Gastrocnemius medialis (tissue), 4 donors: ENCODE measurements at regions of chr12 and their contacts with region 1.

Region 1: DNA sequence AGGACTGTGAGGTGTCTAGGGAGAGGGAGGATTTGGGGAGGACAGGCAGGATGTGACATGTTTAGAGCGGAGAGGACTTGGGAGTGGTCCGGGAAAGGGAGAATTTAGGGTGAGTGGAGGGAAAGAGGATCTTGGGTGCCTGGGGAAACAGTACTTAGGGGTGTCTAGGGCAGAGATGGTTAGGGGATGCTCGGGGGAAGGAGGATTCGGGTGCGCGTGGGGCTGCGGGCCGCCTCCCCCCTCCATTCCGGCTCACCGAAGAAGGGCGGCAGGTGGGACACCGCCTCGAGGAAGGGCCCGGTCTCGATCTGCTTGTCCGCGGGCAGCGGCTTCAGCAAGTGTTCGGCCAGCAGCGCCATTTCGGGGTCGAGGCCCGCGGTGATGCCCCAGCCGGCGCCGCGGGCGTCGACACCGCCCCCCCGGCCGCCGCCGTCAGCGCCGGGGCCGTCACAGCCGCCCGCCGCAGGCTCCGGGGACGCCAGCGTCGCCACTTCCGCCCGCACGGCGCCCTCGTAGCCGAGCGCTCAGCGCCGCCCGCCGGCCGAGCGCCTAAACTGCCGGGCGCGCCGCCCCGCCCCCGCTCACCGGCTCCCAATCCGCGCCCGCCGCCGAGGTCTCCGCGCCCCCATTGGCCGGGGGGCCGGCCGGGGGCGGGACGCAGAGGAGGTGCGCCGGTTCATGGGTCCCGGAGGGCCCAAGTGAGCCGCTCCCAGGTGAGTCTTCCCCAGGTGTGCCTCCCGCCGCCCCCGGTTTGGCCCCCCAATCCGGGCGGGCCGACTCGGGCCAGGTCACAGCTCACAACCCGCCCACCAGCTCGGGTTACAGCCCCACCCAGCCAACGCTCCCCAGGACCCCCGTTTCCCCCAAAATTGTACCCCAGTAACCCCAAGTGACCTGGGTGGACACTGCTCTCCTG is at the start of gene GLTP:
- DNase-seq: peak; percentile 61 to 76
- ATAC-seq: peak; percentile 91 to 96
- H3K4me3 ChIP-seq: peak within 1 kb of the TSS; percentile 66 to 94 (median 83)
- H3K27ac ChIP-seq: peak within 1 kb of the TSS; percentile 60 to 81 (median 78)
- H3K4me1 ChIP-seq: peaks cover 17 to 20% of the 10 kb centered on the region in 2 donors
- H3K27me3 ChIP-seq: no peaks in the 10 kb centered on the region
- CTCF ChIP-seq: peak in 4 of 5 experiments; percentile 85 to 98 (median 88)
- POLR2A ChIP-seq: peak; percentile 63 to 67
- total RNA-seq, gene GLTP: 18.3 to 34.0 (median 22.4) TPM

Region 2: DNA sequence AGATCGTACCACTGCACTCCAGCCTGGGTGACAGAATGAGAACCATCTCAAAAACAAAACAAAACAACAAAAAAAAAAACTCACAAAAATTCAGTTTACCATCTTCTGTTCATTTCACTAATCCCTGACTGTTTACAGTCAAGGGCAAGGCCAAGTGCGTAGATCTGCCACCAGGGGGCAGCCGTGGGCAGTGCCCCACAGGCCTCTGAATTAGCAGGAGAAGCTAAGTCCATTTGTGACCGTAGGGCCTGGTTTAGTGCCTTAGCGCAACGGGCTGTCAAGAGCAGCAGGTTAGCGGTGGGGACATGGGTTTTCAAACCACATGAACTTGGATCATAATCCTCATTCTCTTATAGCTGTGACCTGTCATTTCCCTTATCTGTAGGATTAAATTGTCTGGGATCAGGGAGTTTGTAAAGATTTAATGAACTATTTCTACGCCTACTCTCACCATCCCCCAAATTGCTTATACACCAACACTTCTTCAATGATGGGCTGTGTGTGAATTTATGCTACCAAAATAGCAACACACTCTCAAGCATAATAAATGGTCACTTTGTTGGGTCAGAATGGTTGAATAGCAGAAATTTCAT is 452.1 kb before region 1 on chr12:
- in situ Hi-C with region 1: no loop called
- intact Hi-C with region 1: loop called (anchors 5 kb)
- DNase-seq: peak; percentile 33 to 66
- ATAC-seq: peak; percentile 87 to 93
- H3K4me3 ChIP-seq: no peak overlapping the region
- H3K27ac ChIP-seq: no peak overlapping the region
- H3K4me1 ChIP-seq: peaks cover 0 to 8% of the 10 kb centered on the region in 2 donors
- H3K27me3 ChIP-seq: no peaks in the 10 kb centered on the region
- CTCF ChIP-seq: peak; percentile 70 to 97 (median 80)
- POLR2A ChIP-seq: no peak

Region 3: DNA sequence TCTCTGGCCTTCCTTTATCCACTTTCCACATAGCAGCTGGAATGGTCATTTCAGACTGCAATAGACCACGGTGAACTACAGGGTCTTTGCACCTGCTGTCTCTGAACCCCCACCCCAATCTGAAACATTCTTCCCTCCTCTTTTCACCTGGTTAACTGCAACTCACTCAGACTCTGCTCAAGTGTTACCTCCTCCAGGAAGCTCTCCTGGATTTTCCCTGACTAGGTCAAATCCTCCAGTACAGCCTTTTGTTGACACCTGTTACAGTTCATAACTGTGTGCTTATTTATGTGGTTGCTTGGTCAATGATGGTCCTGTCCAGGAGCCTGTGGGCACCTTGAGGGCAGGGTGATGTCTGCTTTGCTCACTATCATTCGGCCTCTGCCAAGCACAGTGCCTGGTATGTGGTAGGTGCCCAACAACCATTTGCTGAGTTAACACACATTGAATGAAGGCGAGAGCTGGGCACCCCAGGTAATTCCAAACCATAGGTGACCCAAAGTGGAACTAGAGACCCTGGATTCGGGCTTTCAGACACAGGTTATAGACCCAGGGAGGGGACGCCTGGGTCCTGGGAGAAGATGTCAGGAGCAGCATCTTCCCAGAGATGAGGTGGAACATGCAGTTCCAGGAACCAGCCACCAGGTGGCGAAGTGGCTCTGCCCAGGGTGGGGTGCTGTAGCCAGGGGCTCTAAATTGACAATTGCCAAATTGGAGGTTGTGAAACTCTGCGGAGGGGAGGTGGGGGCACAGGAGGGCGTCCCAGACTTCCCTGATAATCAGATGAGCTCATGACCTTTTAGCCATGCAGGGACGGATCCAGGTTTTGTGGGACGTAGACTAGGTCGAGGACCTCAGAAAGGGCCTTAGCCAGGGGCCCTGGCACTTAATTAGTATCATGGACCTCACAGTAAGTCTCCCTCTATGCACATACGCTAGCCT is 75.2 kb before region 1 on chr12:
- in situ Hi-C with region 1: loop called (anchors 5 to 10 kb)
- intact Hi-C with region 1: loop called (anchors 1 kb)
- DNase-seq: peak; percentile 25 to 43
- ATAC-seq: peak; percentile 72 to 78
- H3K4me3 ChIP-seq: no peak overlapping the region
- H3K27ac ChIP-seq: no peak overlapping the region
- H3K4me1 ChIP-seq: no peaks in the 10 kb centered on the region
- H3K27me3 ChIP-seq: no peaks in the 10 kb centered on the region
- CTCF ChIP-seq: peak; percentile 74 to 98 (median 92)
- POLR2A ChIP-seq: no peak

Region 4: DNA sequence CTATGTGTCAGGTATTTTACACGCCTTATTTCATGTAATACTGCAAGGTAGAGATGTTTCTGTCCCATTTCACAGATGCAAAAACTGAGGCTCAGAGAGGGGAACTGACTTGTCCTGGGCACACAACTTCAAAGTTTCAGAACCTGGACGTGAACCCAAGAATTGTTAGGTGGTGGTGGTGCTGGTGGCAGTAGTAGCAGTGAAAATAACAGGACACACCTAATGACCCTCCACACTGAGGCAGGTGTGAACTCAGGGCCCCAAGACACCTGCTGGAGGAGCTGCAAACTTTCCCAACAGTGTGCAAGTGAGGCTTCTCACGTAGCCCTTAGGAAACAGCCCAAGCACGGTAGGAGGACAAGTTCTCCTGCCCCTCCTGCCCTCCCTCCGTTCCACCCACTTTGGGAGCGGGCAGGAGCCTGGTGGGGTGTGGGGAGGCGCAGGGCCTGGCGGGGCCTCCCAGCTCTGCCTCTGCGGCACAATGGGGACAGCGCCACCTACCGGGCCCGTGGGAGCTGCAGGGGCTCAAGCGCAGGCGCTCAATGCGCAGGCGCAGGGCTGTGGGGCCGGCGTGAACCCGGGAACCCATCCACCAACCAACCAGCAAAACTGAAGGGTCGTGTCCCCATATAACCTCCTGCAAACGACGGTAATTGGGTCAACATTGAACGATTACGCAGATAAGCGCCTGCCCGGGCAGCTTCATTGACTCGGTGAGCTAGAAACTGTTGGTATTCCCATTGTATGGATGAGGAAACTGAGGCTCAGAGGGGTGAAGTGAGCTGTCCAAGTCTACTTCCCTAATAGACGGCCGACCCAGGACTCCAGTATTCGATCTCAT is 35.1 kb before region 1 on chr12:
- in situ Hi-C with region 1: no loop called
- intact Hi-C with region 1: loop called (anchors 5 kb)
- DNase-seq: peak; percentile 34 to 60
- ATAC-seq: peak; percentile 69 to 90
- H3K4me3 ChIP-seq: peak overlapping the region in 3 of 4 donors; percentile 24 to 54 (median 39)
- H3K27ac ChIP-seq: no peak overlapping the region
- H3K4me1 ChIP-seq: no peaks in the 10 kb centered on the region
- H3K27me3 ChIP-seq: no peaks in the 10 kb centered on the region
- CTCF ChIP-seq: peak; percentile 82 to 98 (median 92)
- POLR2A ChIP-seq: no peak

Region 5: GRCh38 chr12:110056147-110056484 is 175.8 kb after region 1 on chr12:
- in situ Hi-C with region 1: no loop called
- intact Hi-C with region 1: no loop called
- DNase-seq: no peak
- ATAC-seq: peak in 1 of 2 donors; percentile 27
- H3K4me3 ChIP-seq: no peak overlapping the region
- H3K27ac ChIP-seq: no peak overlapping the region
- H3K4me1 ChIP-seq: no peaks in the 10 kb centered on the region
- H3K27me3 ChIP-seq: no peaks in the 10 kb centered on the region
- CTCF ChIP-seq: no peak
- POLR2A ChIP-seq: no peak